H1 (cell line): ENCODE measurements at regions of chr11 and their contacts with region 1.

Region 1: GRCh38 chr11:66429983-66430602 is 8.6 kb downstream of the MRPL11 start:
- DNase-seq: peak; percentile 29 to 91
- H3K4me3 ChIP-seq: no peak overlapping the region
- H3K27ac ChIP-seq: no peak overlapping the region
- H3K4me1 ChIP-seq: no peaks in the 10 kb centered on the region
- H3K27me3 ChIP-seq: no peaks in the 10 kb centered on the region; a peak in 1 of 7 replicates
- CTCF ChIP-seq: peak; percentile 91 to 97 (median 91)
- EP300 ChIP-seq: no peak
- POLR2A ChIP-seq: no peak
- RAD21 ChIP-seq: peak; percentile 91 to 94

Region 2: DNA sequence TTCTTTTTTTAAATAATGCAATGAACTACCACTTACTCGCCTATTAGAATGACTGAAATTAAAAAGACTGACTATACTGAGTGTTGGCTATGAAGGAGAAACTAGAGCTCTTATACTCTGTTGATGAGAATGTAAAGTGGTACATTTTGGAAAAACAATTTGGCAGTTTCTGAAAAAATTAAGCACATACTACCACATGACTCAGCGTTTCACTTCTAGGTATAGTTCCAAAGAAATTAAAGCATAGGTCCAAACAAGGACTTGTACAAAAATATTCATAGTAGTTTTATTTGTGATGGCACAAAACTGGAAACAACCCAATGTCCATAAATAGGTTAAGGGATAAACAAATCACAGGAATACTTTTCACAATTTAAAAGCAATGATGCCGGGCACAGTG is 36.1 kb before region 1 on chr11:
- CTCF ChIA-PET with region 1: interaction called, 20 read pairs
- POLR2A ChIA-PET with region 1: no interaction called
- DNase-seq: no peak
- H3K4me3 ChIP-seq: no peak overlapping the region
- H3K27ac ChIP-seq: no peak overlapping the region
- H3K4me1 ChIP-seq: no peaks in the 10 kb centered on the region
- H3K27me3 ChIP-seq: no peaks in the 10 kb centered on the region
- CTCF ChIP-seq: no peak
- EP300 ChIP-seq: no peak
- POLR2A ChIP-seq: no peak
- RAD21 ChIP-seq: no peak

Region 3: GRCh38 chr11:66670816-66671215 is 240.7 kb after region 1 on chr11:
- CTCF ChIA-PET with region 1: no interaction called
- POLR2A ChIA-PET with region 1: no interaction called
- DNase-seq: no peak
- H3K4me3 ChIP-seq: no peak overlapping the region
- H3K27ac ChIP-seq: no peak overlapping the region
- H3K4me1 ChIP-seq: peaks cover 0 to 3% (median 0%) of the 10 kb centered on the region in 4 experiments; a peak in 1 of 7 replicates
- H3K27me3 ChIP-seq: no peaks in the 10 kb centered on the region
- CTCF ChIP-seq: no peak
- EP300 ChIP-seq: no peak
- POLR2A ChIP-seq: 0 out of 3 replicates have a peak, but pooled peaks of 1 of the 2 experiments have one; percentile 20
- RAD21 ChIP-seq: no peak